Cardiac septum (tissue), 1 donor: ENCODE measurements at regions of chr19 and their contacts with region 1.

Region 1: GRCh38 chr19:20565321-20566018 is at the start of gene ZNF737:
- DNase-seq: peak; percentile 96
- total RNA-seq, gene ZNF737: 3.3 TPM

Region 2: DNA sequence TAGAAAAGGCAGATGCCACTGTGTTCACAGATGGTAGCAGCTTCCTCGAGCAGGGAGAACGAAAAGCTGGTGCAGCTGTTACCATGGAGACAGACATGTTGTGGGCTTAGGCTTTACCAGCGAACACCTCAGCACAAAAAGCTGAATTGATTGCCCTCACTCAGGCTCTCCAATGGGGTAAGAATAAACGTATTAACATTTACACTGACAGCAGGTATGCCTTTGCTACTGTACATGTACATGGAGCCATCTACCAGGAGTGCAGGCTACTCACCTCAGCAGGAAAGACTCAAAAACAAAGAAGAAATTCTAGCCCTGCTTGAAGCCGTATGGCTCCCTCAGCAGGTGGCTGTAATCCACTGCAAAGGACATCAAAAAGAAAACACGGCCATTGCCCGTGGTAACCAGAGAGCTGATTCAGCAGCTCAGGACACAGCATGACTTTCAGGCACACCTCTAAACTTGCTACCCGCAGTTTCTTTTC is 197.6 kb before region 1 on chr19:
- intact Hi-C with region 1: no loop called
- DNase-seq: no peak

Region 3: GRCh38 chr19:20423381-20424197 is 141.9 kb before region 1 on chr19:
- intact Hi-C with region 1: loop called (anchors 10 kb)
- DNase-seq: peak; percentile 76

Region 4: DNA sequence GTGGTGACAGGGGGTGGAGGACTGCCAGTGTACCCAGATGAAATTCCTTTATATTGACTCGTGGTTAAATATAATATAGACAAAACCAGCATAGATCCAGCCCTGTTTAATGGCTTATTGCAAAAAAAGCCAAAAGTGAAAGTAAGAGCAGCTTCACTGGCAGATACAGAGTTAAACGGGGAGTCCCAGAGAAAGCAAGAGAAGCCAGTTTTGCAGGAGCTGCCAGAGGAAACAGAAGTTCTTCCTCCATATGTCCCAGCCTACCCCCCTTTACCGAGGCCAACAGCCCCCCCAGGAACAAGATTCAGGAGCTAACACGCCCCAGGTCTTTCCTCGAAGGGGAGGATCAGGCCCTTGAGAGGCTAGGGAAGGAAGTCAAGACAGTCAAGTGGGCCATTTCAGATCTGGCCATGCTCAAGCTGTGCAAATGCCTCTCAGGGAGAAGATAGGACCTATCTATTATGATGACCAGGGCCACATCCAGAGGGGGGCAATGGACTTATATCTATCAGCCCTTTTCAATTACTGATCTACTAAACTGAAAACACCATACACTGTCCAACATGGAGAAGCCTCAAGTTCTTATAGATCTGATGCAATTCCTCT is 47.3 kb after region 1 on chr19:
- intact Hi-C with region 1: no loop called
- DNase-seq: no peak

Region 5: DNA sequence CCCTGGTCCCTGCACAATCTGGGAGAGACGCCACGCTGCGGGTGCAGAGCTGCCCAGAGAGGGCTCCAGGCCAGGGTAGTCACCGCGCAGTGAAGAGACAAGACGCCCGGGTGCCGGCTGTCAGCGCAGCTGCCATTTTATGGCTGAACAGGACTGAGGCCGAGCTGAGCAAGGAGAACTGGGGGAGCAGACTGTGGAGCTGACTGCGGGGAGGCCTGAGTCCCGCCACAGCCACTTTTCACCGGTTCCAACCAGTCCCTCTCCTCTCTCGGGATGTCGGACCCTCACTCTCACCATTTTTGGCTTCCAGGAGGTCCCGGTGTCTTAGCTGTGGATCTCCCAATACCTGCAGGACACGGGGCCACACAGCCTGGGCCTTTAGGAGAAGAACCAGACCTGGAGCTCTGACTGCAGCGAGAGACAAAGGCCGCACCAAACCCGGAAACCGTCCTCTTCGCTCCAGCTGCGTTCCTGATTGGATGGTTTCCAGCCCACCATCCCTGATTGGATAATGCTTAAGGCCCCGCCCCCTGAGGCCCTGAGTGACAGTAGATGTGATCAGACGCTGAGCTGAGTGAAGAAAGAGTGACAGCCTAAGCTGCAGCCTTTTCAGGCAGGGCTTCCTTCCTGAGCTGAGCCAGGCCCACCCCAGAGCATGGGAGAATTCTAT is 95.8 kb after region 1 on chr19 and contains the start of gene ZNF626:
- intact Hi-C with region 1: loop called (anchors 10 kb)
- DNase-seq: peak; percentile 96
- total RNA-seq, gene ZNF626: 8.6 TPM

Region 6: GRCh38 chr19:20776083-20777076 is 210.9 kb after region 1 on chr19 and contains the start of gene ZNF66:
- intact Hi-C with region 1: loop called (anchors 5 kb)
- DNase-seq: peak; percentile 98
- total RNA-seq, gene ZNF66: 0.81 TPM

Region 7: GRCh38 chr19:20923077-20923871 is 357.8 kb after region 1 on chr19 and contains the start of gene ZNF85:
- intact Hi-C with region 1: loop called (anchors 5 kb)
- DNase-seq: peak; percentile 94
- total RNA-seq, gene ZNF85: 3.5 TPM